Activated T-helper 1 cell treated with anti-CD3 and anti-CD28 coated beads, Interleukin-12 subunit alpha, Interleukin-12 subunit beta, Interleukin-2, Interleukin-4 antibody, amounts not matched to agents 30 ng/mL and 10 ng/mL and 1 ng/mL, durations not matched to agents 14 hours and 24 hours and 36 hours (primary cell): ENCODE measurements at regions of chr15 and their contacts with region 1.

Region 1: GRCh38 chr15:64825431-64826294 is at the start of gene PIF1:
- DNase-seq: peak; percentile 92
- H3K4me3 Mint-ChIP-seq: peak within 1 kb of the TSS; percentile 91
- H3K27ac Mint-ChIP-seq: peak within 1 kb of the TSS; percentile 91
- H3K4me1 Mint-ChIP-seq: peaks cover 40% of the 10 kb centered on the region
- H3K27me3 Mint-ChIP-seq: no peaks in the 10 kb centered on the region
- total RNA-seq, gene PIF1: 19.1 and 23.9 TPM in 2 replicates

Region 2: GRCh38 chr15:64702816-64703646 is 122.6 kb before region 1 on chr15:
- intact Hi-C with region 1: loop called (anchors 1 kb)
- DNase-seq: peak; percentile 93
- H3K4me3 Mint-ChIP-seq: peak overlapping the region; percentile 82
- H3K27ac Mint-ChIP-seq: peak overlapping the region; percentile 78
- H3K4me1 Mint-ChIP-seq: peaks cover 51% of the 10 kb centered on the region
- H3K27me3 Mint-ChIP-seq: peaks cover under 1% of the 10 kb centered on the region

Region 3: GRCh38 chr15:64841258-64842095 is 15.8 kb after region 1 on chr15 and contains the start of gene PLEKHO2:
- intact Hi-C with region 1: loop called (anchors 1 kb)
- DNase-seq: peak; percentile 90
- H3K4me3 Mint-ChIP-seq: peak within 1 kb of the TSS; percentile 92
- H3K27ac Mint-ChIP-seq: peak within 1 kb of the TSS; percentile 91
- H3K4me1 Mint-ChIP-seq: peaks cover 74% of the 10 kb centered on the region
- H3K27me3 Mint-ChIP-seq: no peaks in the 10 kb centered on the region
- total RNA-seq, gene PLEKHO2: 17.0 and 17.8 TPM in 2 replicates

Region 4: DNA sequence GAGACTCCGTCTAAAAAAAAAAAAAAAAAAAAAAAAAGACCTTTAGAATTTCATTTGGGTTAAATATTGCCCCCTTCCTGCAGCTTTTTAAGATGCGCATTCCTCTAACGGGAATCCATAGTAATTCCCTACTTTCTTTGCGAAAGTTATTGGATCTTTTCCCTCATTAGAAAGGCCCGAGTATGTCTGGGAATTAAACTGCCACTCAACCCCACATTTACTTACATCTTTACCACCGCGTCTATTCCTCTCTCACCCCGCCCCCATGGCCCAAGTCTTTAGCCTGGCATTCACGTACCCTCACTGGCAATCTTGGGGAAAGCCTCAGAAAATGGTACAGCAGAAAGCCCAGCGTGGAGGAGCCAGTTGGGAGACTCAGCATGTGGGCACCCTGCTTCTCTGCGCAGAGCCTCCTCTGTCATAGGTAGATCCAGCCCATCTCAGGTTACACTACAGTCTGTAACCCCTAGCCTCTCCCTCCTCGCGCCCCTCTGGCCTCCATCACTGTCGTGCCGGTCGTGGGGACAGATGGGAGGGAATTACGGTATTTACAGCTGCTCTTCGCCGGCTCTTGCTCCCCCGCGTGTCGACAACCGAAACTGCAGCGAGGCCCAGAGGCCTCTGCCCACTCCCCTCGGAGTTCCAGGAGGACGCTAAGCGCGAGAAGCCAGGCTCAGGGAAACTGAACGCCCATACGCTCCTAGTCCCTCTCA is 79.6 kb after region 1 on chr15:
- intact Hi-C with region 1: loop called (anchors 1 kb)
- DNase-seq: peak; percentile 71
- H3K4me3 Mint-ChIP-seq: peak overlapping the region; percentile 79
- H3K27ac Mint-ChIP-seq: peak overlapping the region; percentile 50
- H3K4me1 Mint-ChIP-seq: peaks cover 44% of the 10 kb centered on the region
- H3K27me3 Mint-ChIP-seq: peaks cover 11% of the 10 kb centered on the region

Region 5: DNA sequence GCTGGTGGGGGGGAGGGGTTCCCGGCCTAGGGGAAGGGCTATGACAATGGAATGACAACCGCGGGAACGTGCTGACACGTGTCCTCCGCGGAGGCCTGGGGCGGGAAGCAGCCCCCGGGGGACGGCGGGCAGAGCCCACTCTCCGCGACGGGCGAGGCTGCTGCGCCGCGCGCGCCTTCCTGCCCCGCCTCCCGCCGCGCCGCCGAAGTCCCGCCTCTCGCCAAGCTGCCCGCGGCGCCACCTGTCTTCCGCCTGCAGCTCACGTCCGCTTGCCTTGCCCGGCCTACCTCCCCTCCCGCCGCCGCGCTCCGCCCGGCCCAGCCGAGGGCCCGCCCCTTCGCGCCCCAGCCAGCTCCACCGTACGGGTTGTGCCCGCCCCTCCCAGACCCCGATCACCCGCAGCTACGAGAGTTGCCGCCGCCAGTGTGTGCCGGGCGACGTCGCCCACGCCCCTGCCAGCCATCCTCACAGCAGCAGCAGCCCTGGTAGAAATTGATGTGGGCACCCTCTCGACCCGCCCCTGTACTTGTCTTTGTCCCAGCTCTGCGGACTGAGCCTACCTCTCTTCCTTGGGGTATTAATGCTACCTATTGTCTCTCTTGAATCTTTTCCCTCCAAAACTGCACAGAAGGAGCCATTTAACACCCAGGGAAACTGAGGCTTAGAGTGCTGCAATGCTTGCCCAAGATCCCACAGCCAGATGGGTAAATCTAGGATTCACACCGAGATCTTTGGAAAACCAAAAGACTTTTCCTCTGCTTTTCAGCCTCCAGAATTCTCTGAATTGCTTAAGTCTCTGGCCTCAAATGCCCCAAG is 461.2 kb after region 1 on chr15 and contains the start of gene PARP16:
- intact Hi-C with region 1: loop called (anchors 2 kb)
- DNase-seq: peak; percentile 90
- H3K4me3 Mint-ChIP-seq: peak within 1 kb of the TSS; percentile 86
- H3K27ac Mint-ChIP-seq: peak within 1 kb of the TSS; percentile 76
- H3K4me1 Mint-ChIP-seq: peaks cover 27% of the 10 kb centered on the region
- H3K27me3 Mint-ChIP-seq: no peaks in the 10 kb centered on the region
- total RNA-seq, gene PARP16: 12.4 and 14.0 TPM in 2 replicates